ENCODE measurements at regions of chr15 and their contacts with region 1.

Region 1: GRCh38 chr15:51162865-51163762 is 68.4 kb upstream of the TNFAIP8L3 start:
- DNase-seq: no peak
- H3K4me3 ChIP-seq: no peak overlapping the region
- H3K27me3 ChIP-seq: peaks cover 4% of the 10 kb centered on the region
- CTCF ChIP-seq: peak; percentile 94

Region 2: DNA sequence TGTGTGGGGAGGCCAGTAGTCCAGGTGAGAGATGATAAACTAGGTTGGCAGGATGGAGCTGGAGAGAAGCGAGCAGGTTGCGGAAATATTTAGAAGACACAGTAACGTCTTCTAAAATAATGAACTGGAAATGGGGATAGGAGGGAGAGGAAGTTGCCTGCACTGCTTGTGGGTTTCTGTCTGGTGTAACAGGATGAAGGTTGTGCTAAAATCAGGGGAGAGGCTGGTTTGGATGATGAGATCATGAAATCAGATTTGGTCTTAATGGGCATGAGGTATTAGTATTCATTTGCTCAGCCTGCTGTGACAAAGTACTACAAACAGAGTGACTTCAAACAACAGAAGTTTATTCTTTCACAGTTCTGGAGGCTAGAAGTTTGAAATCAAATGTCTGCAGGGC is 36.3 kb before region 1 on chr15:
- CTCF ChIA-PET with region 1: no interaction called
- POLR2A ChIA-PET with region 1: no interaction called
- DNase-seq: no peak
- H3K4me3 ChIP-seq: no peak overlapping the region
- H3K27me3 ChIP-seq: no peaks in the 10 kb centered on the region
- CTCF ChIP-seq: no peak

Region 3: DNA sequence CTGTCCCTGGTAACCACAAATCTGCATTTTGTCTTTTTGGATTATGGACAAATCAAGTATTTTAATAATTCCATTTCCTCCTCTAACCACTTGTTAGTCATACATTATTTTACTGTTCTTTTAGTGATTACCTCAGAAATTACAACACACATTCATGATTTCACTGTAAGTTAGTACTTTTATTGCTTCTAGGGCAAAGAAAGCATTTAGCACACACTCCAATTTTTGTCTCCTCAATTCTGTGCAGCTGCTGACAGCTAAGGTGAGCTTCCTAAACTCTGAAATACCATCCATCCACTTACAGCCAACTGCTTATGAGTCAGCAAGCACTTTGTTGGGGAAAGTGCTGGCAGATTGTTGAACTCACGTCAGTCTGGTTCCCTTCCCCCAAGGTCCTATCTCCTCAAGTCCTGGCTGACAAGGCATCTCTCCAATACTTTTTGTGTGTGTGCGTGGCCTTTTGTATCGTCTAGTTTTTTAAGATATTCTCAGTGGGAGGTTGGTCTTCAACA is 19.0 kb before region 1 on chr15:
- CTCF ChIA-PET with region 1: interaction called, 97 read pairs
- POLR2A ChIA-PET with region 1: no interaction called
- DNase-seq: peak; percentile 10
- H3K4me3 ChIP-seq: no peak overlapping the region
- H3K27me3 ChIP-seq: no peaks in the 10 kb centered on the region; the same call in 1 of the 2 replicates
- CTCF ChIP-seq: no peak

Region 4: DNA sequence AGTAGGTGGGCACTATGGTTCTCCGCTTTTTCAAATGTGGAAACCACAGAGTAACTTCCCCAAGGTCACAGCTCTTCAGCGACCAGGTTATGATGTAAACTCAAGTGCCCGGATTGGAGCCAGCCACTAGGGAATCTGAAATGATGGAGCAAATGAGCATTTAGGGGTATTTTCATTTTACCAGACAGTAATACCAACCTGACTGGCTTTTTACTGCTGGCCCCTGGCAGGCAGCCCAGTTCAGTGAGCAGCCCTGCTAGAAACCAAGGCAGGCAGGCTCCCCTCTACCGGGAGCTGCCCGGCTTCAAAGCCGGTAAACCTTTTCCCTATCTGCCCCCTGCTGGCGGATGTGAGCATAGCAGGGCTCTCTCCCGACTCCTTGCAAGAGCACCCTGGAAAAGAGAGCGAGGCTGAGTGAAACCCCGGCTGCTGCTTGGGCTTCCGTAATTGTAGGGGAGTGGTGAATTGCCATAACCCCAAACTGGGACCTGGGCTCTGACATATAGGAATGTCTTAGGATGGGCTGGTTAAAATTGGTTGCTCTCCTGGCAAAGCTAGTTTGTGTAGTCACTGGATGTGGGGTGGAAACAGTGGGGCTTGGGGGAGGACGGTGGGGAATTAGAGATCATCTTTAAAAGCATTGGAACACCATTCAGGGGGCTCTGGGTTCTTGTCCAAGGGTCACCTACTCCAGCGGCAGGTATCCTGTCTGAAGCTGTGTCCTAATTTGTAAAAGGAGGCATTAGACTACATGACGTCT is 29.6 kb after region 1 on chr15:
- CTCF ChIA-PET with region 1: interaction called, 281 read pairs
- POLR2A ChIA-PET with region 1: no interaction called
- DNase-seq: no peak
- H3K4me3 ChIP-seq: no peak overlapping the region
- H3K27me3 ChIP-seq: peaks cover 7% of the 10 kb centered on the region
- CTCF ChIP-seq: peak; percentile 97

Region 5: DNA sequence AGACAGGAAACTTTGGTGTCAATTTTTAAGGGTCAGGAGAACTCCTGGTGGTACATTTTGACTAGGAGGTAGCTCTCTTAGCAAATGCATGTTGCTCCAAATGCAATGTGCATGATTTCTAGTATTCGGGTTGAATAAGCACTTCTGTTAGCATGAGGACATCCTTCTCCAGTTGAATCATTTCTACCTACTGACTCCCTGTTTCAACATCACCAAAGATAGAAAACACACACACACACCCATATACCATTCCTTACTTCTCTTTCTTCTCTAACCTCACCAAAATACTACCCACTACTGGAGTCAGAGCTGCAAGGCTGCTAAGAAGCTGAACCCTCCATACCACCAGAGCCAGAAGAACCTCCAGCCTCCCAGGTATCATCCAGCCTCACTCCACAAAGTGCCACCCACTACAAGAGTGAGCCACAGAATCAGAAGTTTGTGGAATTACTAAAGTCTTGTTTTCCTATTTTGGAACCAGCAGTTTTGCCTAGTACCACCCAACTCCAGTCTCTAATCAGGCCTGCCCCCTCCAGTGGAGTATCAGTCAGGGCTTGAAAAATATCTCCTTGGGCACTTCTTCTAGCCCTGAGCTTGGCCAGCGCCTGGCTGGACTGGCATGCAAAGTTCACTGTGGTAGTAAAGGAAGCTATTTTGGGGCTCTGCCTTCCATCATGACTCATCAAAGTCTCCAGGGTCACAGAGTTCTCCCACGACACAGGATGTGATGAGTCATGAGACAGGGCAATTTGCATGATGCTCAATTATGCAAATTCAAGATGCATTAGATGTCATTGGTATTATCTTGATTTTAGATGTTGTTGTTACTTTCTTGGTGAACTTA is 65.0 kb after region 1 on chr15:
- CTCF ChIA-PET with region 1: interaction called, 48 read pairs
- POLR2A ChIA-PET with region 1: no interaction called
- DNase-seq: peak; percentile 67
- H3K4me3 ChIP-seq: no peak overlapping the region
- H3K27me3 ChIP-seq: no peaks in the 10 kb centered on the region
- CTCF ChIP-seq: no peak

Region 6: GRCh38 chr15:51281368-51281967 is 118.4 kb after region 1 on chr15:
- CTCF ChIA-PET with region 1: interaction called, 23 read pairs
- POLR2A ChIA-PET with region 1: no interaction called
- DNase-seq: no peak
- H3K4me3 ChIP-seq: no peak overlapping the region
- H3K27me3 ChIP-seq: peaks cover 5% of the 10 kb centered on the region; the same call in 1 of the 2 replicates
- CTCF ChIP-seq: peak; percentile 82

Region 7: DNA sequence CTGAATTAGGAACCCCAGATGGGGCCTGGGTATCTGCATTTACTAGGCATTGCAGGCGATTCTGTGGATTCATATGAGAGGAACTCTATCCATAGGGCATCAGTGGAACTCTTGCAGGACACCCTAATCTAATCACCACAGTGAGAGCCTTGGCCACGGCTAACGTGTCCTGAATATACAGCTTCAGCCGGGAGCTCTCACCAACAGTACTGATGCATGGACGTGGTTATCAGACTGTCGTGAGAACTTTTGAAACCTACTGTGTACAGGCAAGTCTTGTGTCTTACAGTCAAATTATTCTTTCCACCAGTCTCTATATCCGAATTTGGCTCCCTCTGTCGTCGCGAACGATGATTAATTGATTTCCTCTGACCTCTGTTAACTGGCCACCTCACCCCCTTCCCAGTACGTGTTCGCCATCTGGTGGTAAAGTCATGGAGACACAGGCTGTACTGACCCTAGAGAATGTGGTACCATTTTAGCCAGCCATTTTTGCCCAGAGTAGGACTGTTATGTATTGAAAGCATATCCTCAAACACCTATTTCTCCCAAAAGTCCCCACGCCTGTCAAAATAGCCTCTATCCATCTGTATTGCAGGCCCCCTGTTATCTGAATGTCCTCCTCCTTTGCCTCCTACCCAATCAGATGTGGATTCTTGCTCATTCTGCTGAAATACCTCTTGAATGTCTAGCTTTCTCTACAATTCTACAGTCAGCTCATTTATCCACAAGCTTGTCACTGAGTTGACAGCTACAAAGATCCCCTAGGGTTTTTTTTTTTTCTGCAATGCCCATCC is 218.1 kb after region 1 on chr15:
- CTCF ChIA-PET with region 1: interaction called, 126 read pairs
- POLR2A ChIA-PET with region 1: no interaction called
- DNase-seq: no peak
- H3K4me3 ChIP-seq: no peak overlapping the region
- H3K27me3 ChIP-seq: peaks cover 2% of the 10 kb centered on the region; the same call in 1 of the 2 replicates
- CTCF ChIP-seq: peak; percentile 88

Region 8: DNA sequence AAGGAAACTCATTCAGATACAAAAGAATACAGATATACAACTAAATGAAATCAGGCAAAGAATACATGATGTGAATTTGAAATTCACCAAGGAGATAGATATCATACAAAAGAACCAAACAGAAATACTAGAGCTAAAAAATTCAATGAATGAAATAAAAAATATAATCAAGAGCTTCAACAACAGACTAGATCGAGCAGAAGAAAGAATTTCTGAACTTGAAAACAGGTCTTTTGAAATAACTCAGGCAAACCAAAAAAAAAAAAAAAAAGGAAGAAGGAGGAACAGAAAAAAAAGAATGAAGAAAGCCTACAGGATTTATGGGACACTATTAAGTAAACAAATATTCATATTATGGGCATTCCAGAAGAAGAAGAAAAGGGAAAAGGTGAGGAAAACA is 321.7 kb after region 1 on chr15:
- CTCF ChIA-PET with region 1: no interaction called
- POLR2A ChIA-PET with region 1: no interaction called
- DNase-seq: no peak
- H3K4me3 ChIP-seq: no peak overlapping the region
- H3K27me3 ChIP-seq: no peaks in the 10 kb centered on the region
- CTCF ChIP-seq: no peak

Measured in BJ (cell line).